Adrenal gland (tissue), 19 donors: ENCODE measurements at regions of chr14 and their contacts with region 1.

Region 1: GRCh38 chr14:39181026-39181692 is 6.1 kb downstream of the PNN start:
- DNase-seq: no peak
- H3K4me3 ChIP-seq: no peak overlapping the region
- H3K27ac ChIP-seq: no peak overlapping the region
- H3K4me1 ChIP-seq: peaks cover 3 to 16% of the 10 kb centered on the region in 2 donors
- H3K27me3 ChIP-seq: no peaks in the 10 kb centered on the region
- CTCF ChIP-seq: no peak
- POLR2A ChIP-seq: no peak

Region 2: DNA sequence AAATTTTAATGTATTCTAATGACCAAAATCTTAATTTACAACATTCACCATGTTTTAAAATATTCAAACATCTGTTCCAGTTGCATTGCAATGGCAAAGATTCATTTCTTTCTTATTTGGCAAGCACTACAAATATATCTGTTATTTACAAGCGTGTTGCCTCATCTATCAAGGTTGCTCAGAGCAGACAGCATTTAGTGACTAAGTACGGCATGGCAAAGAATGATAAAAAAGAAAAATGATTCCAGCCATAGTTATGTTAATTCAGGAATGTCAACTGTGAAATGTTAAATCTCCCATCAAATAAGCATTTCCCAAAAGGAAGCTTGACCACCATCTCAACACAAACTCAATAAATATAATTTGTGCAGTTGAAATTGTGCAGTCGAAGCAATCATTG is 390.2 kb before region 1 on chr14:
- intact Hi-C with region 1: no loop called
- DNase-seq: peak in 1 of 7 donors; percentile 30
- H3K4me3 ChIP-seq: no peak overlapping the region
- H3K27ac ChIP-seq: no peak overlapping the region
- H3K4me1 ChIP-seq: no peaks in the 10 kb centered on the region
- H3K27me3 ChIP-seq: no peaks in the 10 kb centered on the region
- CTCF ChIP-seq: no peak
- POLR2A ChIP-seq: no peak

Region 3: GRCh38 chr14:39266871-39267591 is 85.9 kb after region 1 on chr14:
- intact Hi-C with region 1: loop called in 1 of 2 experiments (anchors 10 kb)
- DNase-seq: peak; percentile 82 to 87 (median 83)
- H3K4me3 ChIP-seq: peak overlapping the region; percentile 25 to 95 (median 82)
- H3K27ac ChIP-seq: peak overlapping the region; percentile 55 to 99 (median 97)
- H3K4me1 ChIP-seq: peaks cover 6 to 37% of the 10 kb centered on the region in 2 donors
- H3K27me3 ChIP-seq: no peaks in the 10 kb centered on the region
- CTCF ChIP-seq: peak in 1 of 6 experiments; percentile 3
- POLR2A ChIP-seq: peak; percentile 56 to 91

Region 4: GRCh38 chr14:39451811-39452210 is 270.7 kb after region 1 on chr14:
- intact Hi-C with region 1: no loop called
- DNase-seq: no peak
- H3K4me3 ChIP-seq: no peak overlapping the region
- H3K27ac ChIP-seq: no peak overlapping the region
- H3K4me1 ChIP-seq: no peaks in the 10 kb centered on the region
- H3K27me3 ChIP-seq: no peaks in the 10 kb centered on the region
- CTCF ChIP-seq: no peak
- POLR2A ChIP-seq: no peak